Thyroid gland (tissue), 4 donors: ENCODE measurements at regions of chr1 and their contacts with region 1.

Region 1: DNA sequence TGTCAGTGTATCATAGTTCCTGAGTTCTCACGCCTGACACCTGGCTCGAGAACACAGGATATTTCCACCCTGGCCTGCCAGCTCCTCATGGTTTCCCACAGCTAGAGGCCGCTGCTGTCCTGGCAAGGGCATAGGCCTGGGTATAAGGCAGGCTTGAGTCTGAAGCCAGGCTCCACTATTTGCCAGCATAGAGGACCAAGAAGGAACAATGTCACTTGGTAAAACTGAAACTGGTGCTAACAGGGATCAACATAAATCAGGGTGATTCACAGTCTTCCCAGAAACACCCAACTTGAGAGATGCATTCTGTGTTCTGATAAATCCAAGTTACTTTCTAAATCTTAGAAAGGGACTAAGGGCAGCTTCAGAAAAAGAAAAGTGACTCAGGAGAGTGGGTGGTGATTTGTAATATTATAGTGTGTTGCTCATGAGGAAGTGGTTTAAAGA is 6.9 kb upstream of the S100A2 start:
- DNase-seq: peak; percentile 92 to 94
- H3K4me3 ChIP-seq: no peak overlapping the region
- H3K27ac ChIP-seq: peak overlapping the region; percentile 10 to 53 (median 32)
- H3K4me1 ChIP-seq: peaks cover 12 to 22% of the 10 kb centered on the region in 2 donors
- H3K27me3 ChIP-seq: no peaks in the 10 kb centered on the region
- CTCF ChIP-seq: peak; percentile 67 to 96 (median 89)
- POLR2A ChIP-seq: no peak

Region 2: GRCh38 chr1:153510984-153511410 is 61.6 kb before region 1 on chr1:
- intact Hi-C with region 1: loop called (anchors 2 kb)
- DNase-seq: peak; percentile 83 to 86
- H3K4me3 ChIP-seq: no peak overlapping the region
- H3K27ac ChIP-seq: no peak overlapping the region
- H3K4me1 ChIP-seq: peaks cover 6 to 24% of the 10 kb centered on the region in 2 donors
- H3K27me3 ChIP-seq: no peaks in the 10 kb centered on the region
- CTCF ChIP-seq: peak; percentile 69 to 95 (median 92)
- POLR2A ChIP-seq: no peak

Region 3: GRCh38 chr1:153532769-153533599 is 39.6 kb before region 1 on chr1:
- intact Hi-C with region 1: loop called (anchors 2 kb)
- DNase-seq: peak; percentile 89 to 93
- H3K4me3 ChIP-seq: peak overlapping the region in 1 of 3 donors; percentile 2
- H3K27ac ChIP-seq: peak overlapping the region; percentile 29 to 99 (median 98)
- H3K4me1 ChIP-seq: peaks cover 27 to 39% of the 10 kb centered on the region in 2 donors
- H3K27me3 ChIP-seq: no peaks in the 10 kb centered on the region
- CTCF ChIP-seq: peak; percentile 77 to 97 (median 94)
- POLR2A ChIP-seq: peak in 1 of 2 donors; percentile 63

Region 4: DNA sequence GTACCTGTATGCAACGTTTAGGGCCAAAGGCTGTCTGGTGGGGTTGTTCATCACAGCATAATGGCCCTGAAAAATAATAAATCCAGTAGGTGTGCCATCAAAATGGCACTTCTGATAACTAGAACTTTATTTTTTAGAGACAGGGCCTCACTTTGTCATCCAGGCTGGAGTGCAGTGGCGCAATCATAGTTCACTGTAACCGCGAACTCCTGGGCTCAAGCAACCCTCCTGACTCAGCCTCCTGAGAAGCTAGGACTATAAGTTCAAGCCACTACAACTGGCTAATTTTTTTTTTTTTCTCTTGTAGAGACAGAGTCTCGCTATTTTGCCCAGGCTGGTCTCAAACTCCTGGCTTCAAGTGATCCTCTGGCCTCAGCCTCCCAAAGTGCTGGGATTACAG is 90.6 kb after region 1 on chr1:
- intact Hi-C with region 1: loop called (anchors 10 kb)
- DNase-seq: no peak
- H3K4me3 ChIP-seq: no peak overlapping the region
- H3K27ac ChIP-seq: no peak overlapping the region
- H3K4me1 ChIP-seq: peaks cover 8 to 11% of the 10 kb centered on the region in 2 donors
- H3K27me3 ChIP-seq: no peaks in the 10 kb centered on the region
- CTCF ChIP-seq: no peak
- POLR2A ChIP-seq: no peak